ENCODE measurements at regions of chr15 and their contacts with region 1.

Region 1: GRCh38 chr15:51776952-51777574 is 25.7 kb downstream of the TMOD2 start:
- DNase-seq: peak; percentile 43
- ATAC-seq: peak; percentile 98
- H3K4me3 ChIP-seq: no peak overlapping the region
- H3K27ac ChIP-seq: no peak overlapping the region
- H3K4me1 ChIP-seq: no peaks in the 10 kb centered on the region
- H3K27me3 ChIP-seq: no peaks in the 10 kb centered on the region
- CTCF ChIP-seq: peak; percentile 74 to 77 (median 75)
- EP300 ChIP-seq: no peak
- POLR2A ChIP-seq: no peak
- RAD21 ChIP-seq: peak; percentile 74

Region 2: DNA sequence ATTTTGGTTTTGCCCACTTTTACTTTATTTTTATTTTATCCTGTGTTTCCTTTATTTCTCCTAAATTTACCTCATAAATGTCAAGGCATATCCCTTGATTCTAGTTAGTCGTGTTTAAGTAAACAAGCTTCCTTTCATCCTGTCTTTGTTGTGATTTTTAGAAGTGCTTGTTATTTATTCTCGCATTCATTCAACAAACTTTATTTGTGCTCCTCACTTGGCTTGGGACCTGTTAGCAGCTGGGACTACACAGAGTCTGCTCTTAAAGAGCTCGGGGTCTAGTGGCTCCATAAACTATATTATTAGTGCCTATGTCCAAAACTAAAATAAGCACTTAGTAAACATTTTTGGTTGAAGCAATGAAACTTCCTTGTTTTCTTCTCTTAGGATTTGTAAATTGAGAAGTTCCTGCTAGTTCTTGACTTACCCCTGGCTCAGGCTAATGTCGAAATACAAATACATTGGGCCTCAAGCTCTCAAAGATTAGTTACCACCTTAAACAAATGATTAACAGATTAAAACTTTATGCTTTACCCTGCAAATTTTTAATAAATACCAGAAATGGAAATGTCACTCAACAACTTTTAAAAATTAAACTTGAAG is 135.4 kb before region 1 on chr15:
- CTCF ChIA-PET with region 1: interaction called, 314 read pairs
- POLR2A ChIA-PET with region 1: no interaction called
- RAD21 ChIA-PET with region 1: interaction called, 232 read pairs
- SMC1A ChIA-PET with region 1: interaction called, 170 read pairs
- in situ Hi-C with region 1: loop called (anchors 5 kb)
- intact Hi-C with region 1: no loop called
- DNase-seq: no peak
- ATAC-seq: no peak
- H3K4me3 ChIP-seq: no peak overlapping the region
- H3K27ac ChIP-seq: no peak overlapping the region
- H3K4me1 ChIP-seq: no peaks in the 10 kb centered on the region
- H3K27me3 ChIP-seq: no peaks in the 10 kb centered on the region
- CTCF ChIP-seq: no peak
- EP300 ChIP-seq: no peak
- POLR2A ChIP-seq: no peak
- RAD21 ChIP-seq: no peak

Region 3: DNA sequence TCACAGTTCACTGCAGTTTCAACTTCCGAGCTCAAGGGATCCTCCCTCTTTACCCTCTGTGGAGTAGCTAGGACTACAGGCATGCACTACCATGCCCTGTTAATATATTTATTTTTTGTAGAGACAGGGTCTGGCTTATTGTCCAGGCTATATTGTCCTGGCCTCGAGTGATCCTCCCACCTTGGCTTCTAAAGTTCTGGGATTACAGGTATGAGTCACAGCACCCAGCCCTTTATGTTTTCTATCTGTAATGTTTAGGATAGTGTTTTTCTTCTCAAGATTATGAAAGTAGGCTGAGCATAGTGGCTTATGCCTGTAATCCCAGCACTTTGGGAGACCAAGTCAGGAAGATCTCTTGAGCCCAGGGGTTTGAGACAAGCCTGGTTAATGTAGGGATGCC is 107.7 kb before region 1 on chr15:
- CTCF ChIA-PET with region 1: interaction called, 11 read pairs
- POLR2A ChIA-PET with region 1: no interaction called
- RAD21 ChIA-PET with region 1: interaction called, 3 read pairs
- SMC1A ChIA-PET with region 1: interaction called, 5 read pairs
- in situ Hi-C with region 1: no loop called
- intact Hi-C with region 1: no loop called
- DNase-seq: no peak
- ATAC-seq: no peak
- H3K4me3 ChIP-seq: no peak overlapping the region
- H3K27ac ChIP-seq: no peak overlapping the region
- H3K4me1 ChIP-seq: no peaks in the 10 kb centered on the region
- H3K27me3 ChIP-seq: no peaks in the 10 kb centered on the region
- CTCF ChIP-seq: no peak
- EP300 ChIP-seq: no peak
- POLR2A ChIP-seq: no peak
- RAD21 ChIP-seq: no peak

Region 4: DNA sequence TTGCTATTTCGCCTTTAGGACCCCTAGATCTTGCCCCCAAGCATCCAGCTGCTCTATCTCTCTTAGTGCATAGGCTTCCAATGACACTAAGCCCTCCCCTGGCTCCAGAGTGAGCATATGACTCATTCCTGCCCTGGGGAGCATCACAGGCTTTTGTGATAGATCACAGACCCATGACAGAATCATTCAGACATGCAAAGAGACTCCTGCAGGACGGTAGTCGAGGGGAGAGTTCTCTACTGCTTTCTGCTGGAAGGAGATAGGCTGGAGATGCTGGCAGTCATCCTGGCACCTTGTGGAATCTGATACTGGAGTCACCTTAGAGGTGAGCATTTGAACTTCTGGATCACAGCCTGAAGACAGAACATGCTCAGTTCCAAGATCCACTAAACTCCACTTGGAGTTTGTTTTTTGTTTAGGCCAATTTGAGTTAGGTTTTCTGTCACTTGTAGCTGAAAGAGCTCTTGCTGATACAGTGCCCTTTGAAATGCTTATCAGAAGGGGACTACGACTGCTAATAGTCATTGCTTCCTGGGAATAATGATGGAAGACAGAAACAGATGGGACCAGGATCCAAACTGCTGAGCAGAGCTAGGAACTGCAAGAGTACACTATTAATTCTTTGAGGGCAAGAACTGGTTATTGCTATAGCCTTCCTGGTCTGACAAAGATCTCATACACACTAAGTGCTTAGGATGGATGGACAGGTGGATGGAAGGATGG is 50.6 kb before region 1 on chr15:
- CTCF ChIA-PET with region 1: interaction called, 136 read pairs
- POLR2A ChIA-PET with region 1: no interaction called
- RAD21 ChIA-PET with region 1: interaction called, 23 read pairs
- SMC1A ChIA-PET with region 1: interaction called, 27 read pairs
- in situ Hi-C with region 1: no loop called
- intact Hi-C with region 1: no loop called
- DNase-seq: no peak
- ATAC-seq: peak; percentile 91
- H3K4me3 ChIP-seq: no peak overlapping the region; the same call in 1 of the 2 replicates
- H3K27ac ChIP-seq: peak overlapping the region; percentile 72
- H3K4me1 ChIP-seq: peaks cover 32% of the 10 kb centered on the region
- H3K27me3 ChIP-seq: no peaks in the 10 kb centered on the region
- CTCF ChIP-seq: no peak
- EP300 ChIP-seq: no peak
- POLR2A ChIP-seq: no peak
- RAD21 ChIP-seq: 0 out of 2 replicates have a peak, but pooled peaks have one; percentile 12

Region 5: GRCh38 chr15:51759557-51760070 is 17.4 kb before region 1 on chr15:
- CTCF ChIA-PET with region 1: interaction called, 31 read pairs
- POLR2A ChIA-PET with region 1: no interaction called
- RAD21 ChIA-PET with region 1: interaction called, 6 read pairs
- SMC1A ChIA-PET with region 1: interaction called, 12 read pairs
- in situ Hi-C with region 1: no loop called
- intact Hi-C with region 1: no loop called
- DNase-seq: no peak
- ATAC-seq: peak; percentile 74
- H3K4me3 ChIP-seq: no peak overlapping the region
- H3K27ac ChIP-seq: no peak overlapping the region
- H3K4me1 ChIP-seq: no peaks in the 10 kb centered on the region
- H3K27me3 ChIP-seq: no peaks in the 10 kb centered on the region
- CTCF ChIP-seq: peak; percentile 24 to 52 (median 41); a peak in 4 of 6 replicates
- EP300 ChIP-seq: no peak
- POLR2A ChIP-seq: no peak
- RAD21 ChIP-seq: no peak

Region 6: GRCh38 chr15:51955504-51956101 is 178.5 kb after region 1 on chr15:
- CTCF ChIA-PET with region 1: no interaction called
- POLR2A ChIA-PET with region 1: no interaction called
- RAD21 ChIA-PET with region 1: no interaction called
- SMC1A ChIA-PET with region 1: no interaction called
- in situ Hi-C with region 1: no loop called
- intact Hi-C with region 1: no loop called
- DNase-seq: no peak
- ATAC-seq: no peak
- H3K4me3 ChIP-seq: no peak overlapping the region
- H3K27ac ChIP-seq: no peak overlapping the region
- H3K4me1 ChIP-seq: no peaks in the 10 kb centered on the region
- H3K27me3 ChIP-seq: no peaks in the 10 kb centered on the region
- CTCF ChIP-seq: no peak
- EP300 ChIP-seq: no peak
- POLR2A ChIP-seq: no peak
- RAD21 ChIP-seq: no peak